ENCODE measurements at regions of chr20 and their contacts with region 1.

Region 1: DNA sequence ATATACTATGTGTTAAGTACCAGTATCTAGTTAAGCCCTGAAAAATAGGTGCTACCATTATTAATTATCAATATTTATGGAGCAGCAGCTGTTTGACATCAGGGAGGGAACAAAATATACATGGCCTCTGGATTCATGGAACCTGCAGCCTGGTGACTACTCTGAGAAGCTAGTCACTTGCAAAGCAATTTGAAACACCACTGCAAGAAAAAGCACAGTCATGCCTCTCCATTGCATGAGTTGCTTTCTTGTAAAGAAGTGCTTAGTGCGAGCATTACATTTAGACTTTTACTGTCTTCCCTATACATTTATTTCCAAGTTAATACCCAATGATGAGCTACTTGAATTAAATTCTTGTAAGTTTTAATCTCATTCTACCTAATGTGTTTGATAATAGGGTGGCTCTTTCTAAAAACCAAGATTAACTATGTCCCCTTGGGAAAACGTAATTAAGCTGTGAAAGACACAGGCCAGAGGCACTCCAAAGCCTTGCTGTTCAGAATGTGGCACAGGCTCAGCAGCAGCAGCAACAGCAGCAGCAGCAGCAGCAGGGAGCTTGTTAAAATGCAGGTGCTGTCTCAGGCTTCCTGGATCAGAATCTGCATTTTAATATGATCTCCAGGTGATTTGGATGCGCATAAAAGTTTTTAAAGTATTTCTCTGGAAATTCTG is 83.6 kb downstream of the PFDN4 start:
- DNase-seq: no peak
- ATAC-seq: no peak
- H3K4me3 ChIP-seq: no peak overlapping the region
- H3K27ac ChIP-seq: no peak overlapping the region
- H3K4me1 ChIP-seq: peaks cover 0 to 12% of the 10 kb centered on the region in 2 donors
- H3K27me3 ChIP-seq: no peaks in the 10 kb centered on the region

Region 2: DNA sequence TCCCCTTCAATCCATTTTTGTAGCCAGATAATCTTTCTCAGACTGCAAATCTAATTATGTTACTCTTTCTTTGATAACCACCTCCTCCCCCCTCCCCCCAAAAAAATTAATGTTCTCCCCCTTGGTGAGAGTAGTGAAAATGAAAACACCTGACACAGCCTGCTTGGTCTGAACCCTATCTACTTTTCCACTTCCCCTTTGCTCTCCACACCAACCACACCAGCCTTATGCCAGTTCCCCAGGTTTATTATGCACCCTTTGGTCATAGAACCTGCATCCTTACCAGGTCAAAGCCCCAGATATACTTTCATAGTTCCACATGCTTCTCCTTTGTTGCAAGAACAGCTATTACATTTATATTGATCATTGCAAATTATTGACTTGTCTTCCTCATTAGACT is 64.2 kb before region 1 on chr20:
- intact Hi-C with region 1: loop called in 1 of 2 experiments (anchors 2 kb)
- DNase-seq: no peak
- ATAC-seq: no peak
- H3K4me3 ChIP-seq: no peak overlapping the region
- H3K27ac ChIP-seq: no peak overlapping the region
- H3K4me1 ChIP-seq: no peaks in the 10 kb centered on the region
- H3K27me3 ChIP-seq: no peaks in the 10 kb centered on the region

Region 3: DNA sequence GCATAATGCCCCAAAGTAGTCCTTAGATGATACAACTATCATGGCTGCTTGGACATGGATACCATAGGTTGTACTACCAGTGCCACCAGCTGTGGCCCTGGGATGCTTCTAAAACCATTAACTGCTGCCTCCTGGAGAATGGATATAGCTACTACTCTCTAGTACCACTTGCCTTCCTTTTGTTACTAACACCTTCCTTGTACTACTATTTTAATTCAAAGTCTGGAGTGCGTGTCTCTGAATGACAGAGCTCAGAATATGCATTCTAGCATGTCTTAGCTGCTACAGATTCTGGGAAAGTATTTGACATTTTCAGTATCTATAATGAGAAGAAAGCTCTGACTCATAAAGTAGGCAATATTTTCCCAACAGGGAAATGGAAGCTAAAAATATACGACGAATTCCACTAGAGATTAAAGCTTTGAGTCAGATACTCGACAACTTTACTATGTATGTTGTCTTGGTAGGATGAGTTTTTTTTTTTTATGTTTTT is 28.7 kb after region 1 on chr20:
- intact Hi-C with region 1: loop called in 1 of 2 experiments (anchors 2 kb)
- DNase-seq: no peak
- ATAC-seq: no peak
- H3K4me3 ChIP-seq: no peak overlapping the region
- H3K27ac ChIP-seq: no peak overlapping the region
- H3K4me1 ChIP-seq: peaks cover 2 to 3% of the 10 kb centered on the region in 2 donors
- H3K27me3 ChIP-seq: no peaks in the 10 kb centered on the region

Region 4: GRCh38 chr20:54633374-54634355 is 342.2 kb after region 1 on chr20:
- intact Hi-C with region 1: no loop called
- DNase-seq: no peak
- ATAC-seq: no peak
- H3K4me3 ChIP-seq: no peak overlapping the region
- H3K27ac ChIP-seq: no peak overlapping the region
- H3K4me1 ChIP-seq: no peaks in the 10 kb centered on the region
- H3K27me3 ChIP-seq: no peaks in the 10 kb centered on the region